Activated CD8-positive, alpha-beta T cell treated with anti-CD3 and anti-CD28 coated beads for 36 hours (primary cell): ENCODE measurements at regions of chr2 and their contacts with region 1.

Region 1: DNA sequence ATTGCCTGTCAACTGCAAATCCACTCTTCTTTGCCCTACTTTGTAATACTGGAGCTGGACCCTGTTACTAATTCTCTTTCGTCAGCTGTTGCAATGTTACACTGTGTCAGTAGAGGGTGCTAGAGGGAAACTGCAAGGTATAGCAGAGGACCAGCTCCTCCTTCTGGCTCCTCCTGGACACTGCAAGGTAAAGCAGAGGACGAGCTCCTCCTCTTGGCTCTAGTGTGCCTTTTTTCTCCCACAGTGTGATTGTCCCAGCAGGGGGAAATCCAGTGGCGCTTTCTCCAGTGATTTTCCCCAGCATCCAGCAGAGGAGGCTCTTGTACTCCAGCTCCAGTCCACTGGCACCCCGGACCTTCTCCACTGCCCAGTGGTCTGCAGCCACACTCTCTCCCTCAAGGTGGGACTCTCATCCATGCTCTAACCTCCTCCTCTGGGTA is 95.6 kb downstream of the CAPN13 start:
- DNase-seq: peak; percentile 93
- ATAC-seq: peak; percentile 91
- H3K4me3 Mint-ChIP-seq: no peak overlapping the region
- H3K27ac Mint-ChIP-seq: no peak overlapping the region
- H3K4me1 Mint-ChIP-seq: peaks cover 12% of the 10 kb centered on the region
- H3K27me3 Mint-ChIP-seq: no peaks in the 10 kb centered on the region
- CTCF ChIP-seq: peak; percentile 100

Region 2: DNA sequence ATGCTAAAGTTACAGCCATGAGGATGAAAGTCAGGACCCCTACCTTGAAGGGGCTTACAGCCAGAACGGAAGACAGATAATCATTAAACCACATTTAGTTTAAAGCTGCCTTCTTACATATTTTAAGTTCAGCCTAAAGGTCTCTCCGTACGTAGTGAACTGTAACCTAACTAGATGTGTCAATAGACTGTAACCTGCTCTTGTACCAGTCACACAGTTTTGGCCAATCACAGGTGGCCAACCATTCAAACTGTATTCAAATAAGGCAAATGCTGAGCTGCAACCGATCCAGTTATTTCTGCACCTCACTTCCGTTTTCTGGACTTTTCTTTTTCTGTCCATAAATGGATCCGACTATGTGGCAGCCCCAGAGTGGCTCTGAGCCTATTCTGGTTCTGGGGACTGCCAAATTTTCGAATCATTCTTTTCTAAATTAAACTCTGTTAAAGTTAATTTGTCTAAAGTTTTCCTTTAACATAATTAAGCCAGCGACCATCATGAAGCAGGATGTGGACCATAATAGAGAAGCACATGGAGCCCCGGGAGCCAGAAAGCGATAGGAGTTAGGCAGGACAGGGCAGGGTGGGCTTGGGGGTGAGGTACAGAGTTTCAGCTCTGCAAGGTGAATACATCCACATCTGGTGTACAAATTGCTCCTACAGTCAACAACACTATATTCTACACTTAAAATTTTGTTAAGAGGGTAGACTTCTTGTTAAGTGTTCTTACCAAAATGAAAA is 613.2 kb before region 1 on chr2:
- CTCF ChIA-PET with region 1: no interaction called
- POLR2A ChIA-PET with region 1: no interaction called
- intact Hi-C with region 1: loop called (anchors 5 kb)
- DNase-seq: no peak
- ATAC-seq: no peak
- H3K4me3 Mint-ChIP-seq: no peak overlapping the region
- H3K27ac Mint-ChIP-seq: no peak overlapping the region
- H3K4me1 Mint-ChIP-seq: no peaks in the 10 kb centered on the region
- H3K27me3 Mint-ChIP-seq: peaks cover 14% of the 10 kb centered on the region
- CTCF ChIP-seq: no peak

Region 3: DNA sequence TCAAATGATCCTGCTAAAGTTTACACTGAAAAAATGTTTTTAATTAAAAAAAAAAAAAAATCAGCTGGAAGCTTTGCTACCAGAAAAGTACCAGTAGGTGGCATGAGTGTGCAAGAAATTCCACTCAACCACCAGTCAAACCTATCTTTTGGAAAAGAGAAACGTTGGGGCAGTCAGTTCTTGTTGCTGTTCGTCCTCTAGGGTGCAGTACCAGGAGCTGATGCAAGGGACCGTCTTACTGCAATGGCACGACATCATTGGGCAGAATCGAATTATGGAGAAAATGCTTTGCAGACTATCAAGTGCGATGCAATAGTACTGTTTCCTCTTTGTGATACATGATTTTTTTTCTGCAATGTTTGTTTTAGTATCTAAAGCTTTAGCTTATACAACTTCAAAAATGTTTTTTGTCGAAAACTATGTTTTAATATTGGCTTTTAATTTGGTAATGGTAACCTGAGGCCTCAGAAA is 546.6 kb before region 1 on chr2:
- CTCF ChIA-PET with region 1: interaction called, 563 read pairs
- POLR2A ChIA-PET with region 1: interaction called, 7 read pairs
- intact Hi-C with region 1: loop called (anchors 1 kb)
- DNase-seq: peak; percentile 80
- ATAC-seq: peak; percentile 100
- H3K4me3 Mint-ChIP-seq: no peak overlapping the region
- H3K27ac Mint-ChIP-seq: no peak overlapping the region
- H3K4me1 Mint-ChIP-seq: peaks cover 21% of the 10 kb centered on the region
- H3K27me3 Mint-ChIP-seq: no peaks in the 10 kb centered on the region
- CTCF ChIP-seq: peak; percentile 82

Region 4: DNA sequence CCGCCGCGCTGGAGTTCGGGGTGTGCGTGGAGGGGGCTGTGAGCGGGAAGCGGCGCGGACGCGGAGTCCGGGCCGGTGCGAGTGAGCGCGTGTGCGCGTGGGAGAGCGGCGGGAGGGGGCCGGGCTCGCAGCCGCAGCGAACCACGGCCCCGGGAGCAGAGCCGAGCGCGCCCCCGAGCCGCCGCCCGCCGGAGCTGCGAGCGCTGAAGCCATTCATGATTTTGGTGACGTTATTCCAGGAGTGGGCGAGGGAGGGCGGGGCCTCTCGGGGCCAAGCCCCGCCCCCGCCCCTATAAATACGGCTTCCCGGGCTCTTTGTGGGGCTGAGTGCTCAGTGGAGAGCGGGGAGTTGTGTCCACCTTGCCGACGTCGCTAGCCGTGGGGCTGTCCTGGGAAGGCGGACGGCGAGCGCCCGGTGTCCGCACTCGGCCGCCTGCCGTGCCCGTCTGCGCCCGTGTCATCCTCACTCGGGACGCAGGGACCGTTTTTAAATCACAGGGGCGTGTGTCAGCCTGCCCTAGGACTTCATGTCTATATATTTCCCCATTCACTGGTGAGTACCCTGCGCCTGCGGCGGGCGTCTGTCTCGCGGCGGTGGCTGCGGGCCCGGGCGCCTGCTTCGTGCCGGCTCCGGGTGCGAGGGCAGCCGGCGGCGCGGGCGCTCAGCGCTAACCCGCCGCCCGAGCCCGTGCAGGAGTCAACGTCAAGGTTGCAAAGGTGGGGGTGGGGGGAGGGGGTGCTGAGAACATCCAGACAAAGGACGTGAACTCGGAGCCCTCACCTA is 480.3 kb before region 1 on chr2 and contains the start of gene LBH:
- CTCF ChIA-PET with region 1: interaction called, 14 read pairs
- POLR2A ChIA-PET with region 1: interaction called, 3 read pairs
- intact Hi-C with region 1: no loop called
- DNase-seq: peak; percentile 93
- ATAC-seq: peak; percentile 44
- H3K4me3 Mint-ChIP-seq: peak within 1 kb of the TSS; percentile 78
- H3K27ac Mint-ChIP-seq: peak within 1 kb of the TSS; percentile 97
- H3K4me1 Mint-ChIP-seq: peaks cover 63% of the 10 kb centered on the region
- H3K27me3 Mint-ChIP-seq: no peaks in the 10 kb centered on the region
- CTCF ChIP-seq: no peak
- total RNA-seq, gene LBH: 127 to 130 TPM

Region 5: DNA sequence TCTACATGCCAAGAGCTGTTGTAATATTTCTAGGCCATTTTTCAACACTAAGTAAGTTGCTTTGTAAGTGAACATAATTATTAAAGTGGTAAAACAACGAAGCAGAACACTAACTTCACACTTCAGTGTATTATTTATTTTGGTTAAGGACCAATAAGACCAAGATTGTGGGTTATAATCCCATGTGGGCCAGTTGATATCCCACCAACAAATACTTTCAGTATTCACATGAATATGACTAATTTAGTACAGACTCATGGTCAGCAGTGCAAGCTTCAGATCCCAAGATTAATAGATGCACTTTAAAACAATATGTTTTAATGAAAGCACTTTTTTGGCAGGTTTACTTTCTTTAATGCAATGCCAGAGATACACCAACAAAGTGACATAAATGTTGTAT is 110.3 kb before region 1 on chr2:
- CTCF ChIA-PET with region 1: no interaction called
- POLR2A ChIA-PET with region 1: no interaction called
- intact Hi-C with region 1: no loop called
- DNase-seq: no peak
- ATAC-seq: no peak
- H3K4me3 Mint-ChIP-seq: no peak overlapping the region
- H3K27ac Mint-ChIP-seq: no peak overlapping the region
- H3K4me1 Mint-ChIP-seq: peaks cover 2% of the 10 kb centered on the region
- H3K27me3 Mint-ChIP-seq: no peaks in the 10 kb centered on the region
- CTCF ChIP-seq: no peak

Region 6: DNA sequence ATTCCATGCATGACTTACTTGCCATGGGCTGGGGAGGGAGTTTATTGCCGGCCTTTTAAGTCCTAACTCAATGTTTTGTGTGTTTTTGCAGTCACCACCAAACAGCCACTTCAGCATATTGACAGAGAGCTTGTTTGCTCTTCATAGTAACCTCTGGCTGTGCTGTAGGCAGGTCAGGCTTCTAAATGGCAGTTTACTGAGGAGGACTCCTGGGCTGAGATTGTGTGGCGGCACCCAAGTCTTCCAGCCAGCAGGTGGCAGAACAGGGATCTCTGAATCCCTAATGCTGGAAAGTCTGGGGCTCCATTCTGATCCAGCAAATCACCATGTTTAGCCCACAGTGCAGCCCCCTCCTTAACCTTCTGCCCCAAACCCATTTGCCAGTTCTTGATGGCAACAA is 25.7 kb before region 1 on chr2:
- CTCF ChIA-PET with region 1: interaction called, 125 read pairs
- POLR2A ChIA-PET with region 1: no interaction called
- intact Hi-C with region 1: no loop called
- DNase-seq: no peak
- ATAC-seq: no peak
- H3K4me3 Mint-ChIP-seq: no peak overlapping the region
- H3K27ac Mint-ChIP-seq: no peak overlapping the region
- H3K4me1 Mint-ChIP-seq: no peaks in the 10 kb centered on the region
- H3K27me3 Mint-ChIP-seq: no peaks in the 10 kb centered on the region
- CTCF ChIP-seq: no peak

Region 7: DNA sequence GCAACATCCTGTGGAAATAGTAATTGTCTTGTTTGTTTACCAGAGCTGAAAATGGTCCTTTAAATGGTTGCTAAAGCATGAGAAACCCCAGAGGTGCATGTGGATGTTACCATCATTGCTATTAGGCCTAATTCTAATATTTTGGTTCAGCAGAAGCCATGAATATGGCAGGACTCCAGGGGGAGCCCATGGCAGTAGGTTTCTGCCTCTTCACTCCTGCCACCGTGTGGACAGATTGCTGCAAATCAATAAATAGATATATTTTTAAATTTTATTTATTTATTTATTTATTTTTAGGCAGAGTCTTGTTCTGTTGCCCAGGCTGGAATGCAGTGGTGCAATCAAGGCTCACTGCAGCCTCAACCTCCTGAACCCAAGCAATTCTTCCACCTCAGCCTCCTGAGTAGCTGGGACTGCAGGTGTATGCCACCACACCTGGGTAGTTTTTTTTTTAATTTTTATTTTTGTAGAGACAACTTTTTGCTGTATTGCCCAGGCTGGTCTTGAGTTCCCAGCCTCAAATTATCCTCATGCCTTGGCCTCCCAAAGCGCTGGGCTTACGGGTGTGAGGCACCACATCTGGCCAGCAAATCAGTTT is 150.5 kb after region 1 on chr2:
- CTCF ChIA-PET with region 1: interaction called, 101 read pairs
- POLR2A ChIA-PET with region 1: no interaction called
- intact Hi-C with region 1: loop called (anchors 5 kb)
- DNase-seq: peak; percentile 71
- ATAC-seq: peak; percentile 47
- H3K4me3 Mint-ChIP-seq: no peak overlapping the region
- H3K27ac Mint-ChIP-seq: no peak overlapping the region
- H3K4me1 Mint-ChIP-seq: no peaks in the 10 kb centered on the region
- H3K27me3 Mint-ChIP-seq: peaks cover 3% of the 10 kb centered on the region
- CTCF ChIP-seq: peak; percentile 92

Region 8: DNA sequence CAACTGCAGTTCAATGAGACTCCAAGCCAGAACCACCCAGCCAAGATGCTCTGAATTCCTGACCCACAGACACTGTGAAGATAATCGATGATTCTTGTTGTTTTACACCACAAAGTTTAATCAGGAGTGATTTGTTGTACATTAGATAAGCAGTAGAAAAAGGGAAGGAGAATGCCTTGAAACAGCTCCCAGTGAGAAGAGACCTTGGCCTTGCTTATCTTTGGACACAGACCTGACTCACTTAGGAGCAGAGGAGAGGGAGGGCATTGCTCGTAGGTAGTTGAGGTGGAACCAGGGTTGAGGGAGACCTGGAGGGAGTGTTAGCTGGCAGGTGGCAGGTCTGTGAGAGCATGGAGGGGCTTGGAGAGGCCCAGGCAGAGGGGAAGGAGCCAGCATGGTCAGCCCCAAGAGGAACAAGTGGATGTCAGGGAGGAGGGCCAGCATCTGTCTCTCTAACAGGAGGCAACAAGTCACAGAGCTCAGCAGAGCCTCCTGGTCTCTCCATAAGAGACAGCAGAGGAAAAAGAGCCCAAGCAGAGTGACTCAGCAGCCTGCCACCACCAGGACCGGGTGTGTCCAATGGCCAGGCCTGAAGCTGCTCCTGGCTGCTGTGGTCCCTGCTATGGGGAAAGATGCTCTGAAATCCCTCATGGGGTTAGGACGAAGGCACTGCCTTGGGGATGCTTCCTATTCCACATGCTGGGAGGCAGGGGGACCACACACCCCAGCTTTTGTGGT is 257.2 kb after region 1 on chr2:
- CTCF ChIA-PET with region 1: no interaction called
- POLR2A ChIA-PET with region 1: no interaction called
- intact Hi-C with region 1: no loop called
- DNase-seq: no peak
- ATAC-seq: no peak
- H3K4me3 Mint-ChIP-seq: no peak overlapping the region
- H3K27ac Mint-ChIP-seq: no peak overlapping the region
- H3K4me1 Mint-ChIP-seq: no peaks in the 10 kb centered on the region
- H3K27me3 Mint-ChIP-seq: peaks cover 3% of the 10 kb centered on the region
- CTCF ChIP-seq: no peak

Region 9: GRCh38 chr2:31523871-31524492 is 812.3 kb after region 1 on chr2:
- CTCF ChIA-PET with region 1: interaction called, 6 read pairs
- POLR2A ChIA-PET with region 1: no interaction called
- intact Hi-C with region 1: loop called (anchors 10 kb)
- DNase-seq: peak; percentile 74
- ATAC-seq: peak; percentile 30
- H3K4me3 Mint-ChIP-seq: no peak overlapping the region
- H3K27ac Mint-ChIP-seq: no peak overlapping the region
- H3K4me1 Mint-ChIP-seq: no peaks in the 10 kb centered on the region
- H3K27me3 Mint-ChIP-seq: peaks cover 24% of the 10 kb centered on the region
- CTCF ChIP-seq: peak; percentile 77